ENCODE measurements at regions of chr10 and their contacts with region 1.

Region 1: GRCh38 chr10:34522546-34522945 is 292.6 kb downstream of the PARD3 start:
- DNase-seq: no peak
- H3K4me3 ChIP-seq: no peak overlapping the region
- H3K27ac ChIP-seq: no peak overlapping the region
- H3K4me1 ChIP-seq: peaks cover 38% of the 10 kb centered on the region
- H3K27me3 ChIP-seq: no peaks in the 10 kb centered on the region
- CTCF ChIP-seq: peak in 1 of 2 donors; percentile 16

Region 2: DNA sequence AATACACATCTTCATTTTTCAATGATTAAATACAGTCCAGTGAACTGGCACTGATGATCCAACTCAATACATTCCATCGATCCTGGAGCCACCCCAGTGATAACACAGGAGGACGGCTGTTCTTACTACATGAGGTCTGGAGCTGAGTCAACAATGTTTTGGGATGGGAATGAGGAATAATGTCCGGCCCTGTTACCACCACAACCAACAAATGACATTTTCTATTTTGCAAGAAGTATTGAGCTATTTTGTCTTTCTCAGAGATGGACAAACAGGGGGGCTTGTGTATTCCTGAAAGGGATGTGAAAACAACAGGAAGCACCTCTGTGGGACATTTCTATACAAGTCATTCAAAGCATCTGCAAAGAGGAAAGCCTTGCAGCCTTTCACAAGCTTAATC is 43.4 kb after region 1 on chr10:
- CTCF ChIA-PET with region 1: no interaction called
- dilution Hi-C with region 1: loop called (anchors 5 kb)
- in situ Hi-C with region 1: no loop called
- intact Hi-C with region 1: no loop called
- DNase-seq: no peak
- H3K4me3 ChIP-seq: no peak overlapping the region
- H3K27ac ChIP-seq: no peak overlapping the region
- H3K4me1 ChIP-seq: peaks cover 4% of the 10 kb centered on the region
- H3K27me3 ChIP-seq: no peaks in the 10 kb centered on the region
- CTCF ChIP-seq: no peak